H1 (cell line): ENCODE measurements at regions of chr15 and their contacts with region 1.

Region 1: DNA sequence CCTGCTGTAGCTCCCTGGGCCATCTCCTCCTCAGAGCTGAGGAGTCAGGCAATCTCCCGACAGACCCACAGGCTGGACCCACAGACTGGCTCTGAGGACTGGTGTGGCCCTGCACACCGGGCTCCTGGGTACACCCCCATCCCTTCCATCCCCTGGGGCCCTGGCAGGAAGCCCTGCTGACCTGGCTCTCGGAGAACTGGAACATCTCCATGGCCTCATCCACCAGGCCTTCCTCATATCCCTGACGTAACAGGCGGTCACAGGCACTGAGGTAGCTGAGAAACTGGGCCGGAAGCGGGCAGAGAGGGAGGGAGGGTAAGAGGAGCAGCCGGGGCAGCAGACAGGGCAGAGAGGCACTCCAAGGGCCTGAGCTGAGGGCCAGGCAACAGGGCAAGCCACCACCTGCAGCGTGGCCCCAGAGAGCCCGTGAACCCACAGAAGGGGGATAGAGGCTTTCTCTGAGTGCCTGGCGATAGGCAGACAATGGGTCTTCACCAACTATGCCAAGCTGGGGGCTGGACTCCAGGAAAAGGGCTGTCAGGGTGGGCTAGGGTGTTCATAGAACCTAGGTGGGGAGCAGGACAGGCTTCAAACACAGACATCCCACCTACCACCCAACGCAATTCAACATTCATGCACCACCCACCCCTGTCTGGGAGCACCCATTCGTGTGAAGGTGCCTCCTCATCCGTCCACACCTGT is 17.9 kb downstream of the KBTBD13 start:
- DNase-seq: no peak
- H3K4me3 ChIP-seq: no peak overlapping the region
- H3K27ac ChIP-seq: no peak overlapping the region; the same call in 1 of the 2 replicates
- H3K4me1 ChIP-seq: peaks cover 0 to 3% (median under 1%) of the 10 kb centered on the region in 4 experiments; a peak in 2 of 7 replicates
- H3K27me3 ChIP-seq: no peaks in the 10 kb centered on the region
- CTCF ChIP-seq: no peak
- EP300 ChIP-seq: no peak
- POLR2A ChIP-seq: no peak
- RAD21 ChIP-seq: no peak

Region 2: DNA sequence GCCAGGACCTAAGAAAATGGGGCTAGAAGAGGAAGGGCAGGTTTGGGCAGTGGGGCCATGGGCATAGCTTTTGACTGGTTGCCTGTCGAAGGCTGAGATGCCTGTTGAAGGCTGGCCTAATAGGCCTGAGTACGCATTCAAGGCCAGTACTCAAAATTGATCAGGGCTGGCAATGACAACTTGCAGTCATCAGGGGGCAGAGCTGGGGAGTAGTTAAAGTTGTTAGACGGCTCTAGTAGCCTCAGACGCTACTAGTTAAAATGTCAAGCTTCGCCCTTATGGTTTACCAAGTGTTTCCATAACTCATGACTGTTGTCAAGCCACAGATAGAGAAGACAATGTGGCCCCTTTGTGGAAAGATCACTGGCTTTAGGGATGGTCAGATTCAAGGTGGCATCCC is 133.4 kb before region 1 on chr15:
- CTCF ChIA-PET with region 1: no interaction called
- POLR2A ChIA-PET with region 1: no interaction called
- DNase-seq: no peak
- H3K4me3 ChIP-seq: no peak overlapping the region
- H3K27ac ChIP-seq: no peak overlapping the region
- H3K4me1 ChIP-seq: no peaks in the 10 kb centered on the region
- H3K27me3 ChIP-seq: no peaks in the 10 kb centered on the region
- CTCF ChIP-seq: peak; percentile 41 to 61 (median 55)
- EP300 ChIP-seq: no peak
- POLR2A ChIP-seq: no peak
- RAD21 ChIP-seq: peak; percentile 30 to 50; a peak in 3 of 4 replicates

Region 3: GRCh38 chr15:65054333-65055200 is 39.9 kb before region 1 on chr15:
- CTCF ChIA-PET with region 1: interaction called, 1,213 read pairs
- POLR2A ChIA-PET with region 1: no interaction called
- DNase-seq: peak in 1 of 2 experiments; percentile 88
- H3K4me3 ChIP-seq: no peak overlapping the region
- H3K27ac ChIP-seq: no peak overlapping the region
- H3K4me1 ChIP-seq: no peaks in the 10 kb centered on the region
- H3K27me3 ChIP-seq: no peaks in the 10 kb centered on the region; a peak in 2 of 7 replicates
- CTCF ChIP-seq: peak; percentile 95 to 97 (median 97)
- EP300 ChIP-seq: no peak
- POLR2A ChIP-seq: no peak
- RAD21 ChIP-seq: peak; percentile 96